Activated B cell treated with CpG ODN at 0.5 μM for 24 hours (primary cell): ENCODE measurements at regions of chr1 and their contacts with region 1.

Region 1: GRCh38 chr1:90850898-90851710 is 134.0 kb upstream of the BARHL2 start:
- DNase-seq: peak; percentile 66
- ATAC-seq: peak; percentile 99
- H3K4me3 Mint-ChIP-seq: peak overlapping the region; percentile 84
- H3K27ac Mint-ChIP-seq: no peak overlapping the region
- H3K4me1 Mint-ChIP-seq: peaks cover 14% of the 10 kb centered on the region
- H3K27me3 Mint-ChIP-seq: peaks cover 32% of the 10 kb centered on the region
- CTCF ChIP-seq: no peak

Region 2: DNA sequence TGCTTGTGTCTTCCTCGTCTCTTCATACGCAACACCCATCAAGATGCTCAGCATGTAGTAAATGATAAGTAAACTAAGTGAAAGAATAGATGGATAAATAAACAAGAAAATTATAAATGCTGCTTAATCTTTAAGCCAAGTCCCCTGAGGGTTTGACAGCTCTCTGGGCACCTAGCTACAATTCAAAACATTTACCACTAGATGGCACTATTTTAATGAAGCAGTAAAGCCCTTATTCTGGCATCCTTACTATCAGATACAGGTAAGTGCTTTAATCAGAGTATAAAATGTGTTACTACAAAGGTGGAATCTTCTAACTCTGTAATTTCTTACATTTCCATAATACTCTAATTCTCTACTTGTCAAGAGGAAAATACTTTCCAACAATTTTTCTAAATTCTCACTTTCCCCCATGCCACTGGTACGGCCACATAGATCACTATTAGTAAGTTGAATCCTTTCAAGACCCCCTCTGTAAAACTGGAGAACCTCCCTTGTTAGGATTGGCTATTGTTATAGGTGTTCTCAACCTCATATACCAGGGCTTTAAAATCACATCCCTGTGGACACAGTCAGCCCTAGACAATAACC is 271.8 kb before region 1 on chr1:
- CTCF ChIA-PET with region 1: no interaction called
- POLR2A ChIA-PET with region 1: no interaction called
- intact Hi-C with region 1: loop called (anchors 10 kb)
- DNase-seq: no peak
- ATAC-seq: no peak
- H3K4me3 Mint-ChIP-seq: no peak overlapping the region
- H3K27ac Mint-ChIP-seq: no peak overlapping the region
- H3K4me1 Mint-ChIP-seq: no peaks in the 10 kb centered on the region
- H3K27me3 Mint-ChIP-seq: peaks cover 6% of the 10 kb centered on the region
- CTCF ChIP-seq: peak; percentile 58

Region 3: GRCh38 chr1:90834886-90835660 is 16.0 kb before region 1 on chr1:
- CTCF ChIA-PET with region 1: no interaction called
- POLR2A ChIA-PET with region 1: no interaction called
- intact Hi-C with region 1: loop called (anchors 1 kb)
- DNase-seq: no peak
- ATAC-seq: no peak
- H3K4me3 Mint-ChIP-seq: peak overlapping the region; percentile 3
- H3K27ac Mint-ChIP-seq: no peak overlapping the region
- H3K4me1 Mint-ChIP-seq: peaks cover 23% of the 10 kb centered on the region
- H3K27me3 Mint-ChIP-seq: peaks cover 75% of the 10 kb centered on the region
- CTCF ChIP-seq: no peak

Region 4: GRCh38 chr1:91500756-91501522 is 649.8 kb after region 1 on chr1 and contains the start of gene CDC7:
- CTCF ChIA-PET with region 1: no interaction called
- POLR2A ChIA-PET with region 1: no interaction called
- intact Hi-C with region 1: loop called (anchors 10 kb)
- DNase-seq: peak; percentile 83
- ATAC-seq: peak; percentile 88
- H3K4me3 Mint-ChIP-seq: no peak within 1 kb of the TSS
- H3K27ac Mint-ChIP-seq: no peak within 1 kb of the TSS
- H3K4me1 Mint-ChIP-seq: peaks cover 16% of the 10 kb centered on the region
- H3K27me3 Mint-ChIP-seq: no peaks in the 10 kb centered on the region
- CTCF ChIP-seq: no peak
- total RNA-seq, gene CDC7: 5.8 and 7.3 TPM in 2 replicates